Right ventricle myocardium inferior (tissue), 1 donor: ENCODE measurements at regions of chr6 and their contacts with region 1.

Region 1: DNA sequence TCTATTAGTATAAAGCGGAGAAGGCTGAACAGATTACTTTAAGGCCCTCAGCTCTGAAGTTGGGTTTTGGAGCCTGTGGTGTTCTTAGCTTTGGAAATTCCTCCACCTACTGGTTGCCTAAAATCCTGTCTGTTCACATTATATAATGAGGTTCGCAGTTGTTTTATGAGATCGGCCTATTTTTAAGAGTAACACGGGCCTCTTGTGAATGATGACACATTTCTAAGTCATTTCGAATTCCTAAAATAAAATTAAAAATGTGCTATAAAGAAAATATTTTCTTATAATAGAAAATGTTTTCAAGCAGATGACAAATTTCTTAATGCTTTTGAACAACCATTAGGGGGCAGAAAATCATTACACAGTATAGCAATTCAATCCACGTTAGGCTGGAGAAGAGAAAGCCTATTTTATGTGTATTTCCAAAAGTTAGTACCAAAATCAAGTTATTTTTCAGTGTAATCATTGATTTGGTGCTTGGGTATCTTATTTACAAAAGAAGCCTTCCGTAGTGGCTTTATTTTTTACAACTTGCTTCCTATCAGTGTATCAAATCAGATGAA is 15.8 kb upstream of the FAM8A1 start:
- DNase-seq: no peak
- ATAC-seq: peak; percentile 82

Region 2: GRCh38 chr6:17156112-17156921 is 428.0 kb before region 1 on chr6:
- intact Hi-C with region 1: loop called (anchors 1 kb)
- DNase-seq: no peak
- ATAC-seq: no peak

Region 3: GRCh38 chr6:17289630-17290061 is 294.7 kb before region 1 on chr6:
- intact Hi-C with region 1: loop called (anchors 5 kb)
- DNase-seq: peak; percentile 79
- ATAC-seq: peak; percentile 93

Region 4: DNA sequence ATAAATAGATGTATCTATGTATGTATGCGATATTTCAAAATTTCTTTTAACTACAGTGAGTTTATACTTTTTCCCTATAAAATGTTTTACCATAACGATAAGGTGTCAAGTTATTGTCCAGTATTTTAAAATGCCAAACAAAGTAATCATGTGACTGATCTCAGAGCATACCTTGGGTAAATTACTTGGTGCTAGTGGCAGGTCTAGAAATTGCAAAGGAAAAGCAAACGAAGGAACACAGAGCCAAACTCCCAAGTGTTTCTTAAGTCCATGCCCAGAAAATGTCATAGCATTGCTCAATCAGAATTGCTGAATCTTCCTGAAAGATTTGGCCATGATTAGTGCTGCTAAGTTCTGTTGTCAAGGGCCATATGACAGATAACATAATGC is 113.4 kb before region 1 on chr6:
- intact Hi-C with region 1: loop called (anchors 5 kb)
- DNase-seq: no peak
- ATAC-seq: no peak

Region 5: DNA sequence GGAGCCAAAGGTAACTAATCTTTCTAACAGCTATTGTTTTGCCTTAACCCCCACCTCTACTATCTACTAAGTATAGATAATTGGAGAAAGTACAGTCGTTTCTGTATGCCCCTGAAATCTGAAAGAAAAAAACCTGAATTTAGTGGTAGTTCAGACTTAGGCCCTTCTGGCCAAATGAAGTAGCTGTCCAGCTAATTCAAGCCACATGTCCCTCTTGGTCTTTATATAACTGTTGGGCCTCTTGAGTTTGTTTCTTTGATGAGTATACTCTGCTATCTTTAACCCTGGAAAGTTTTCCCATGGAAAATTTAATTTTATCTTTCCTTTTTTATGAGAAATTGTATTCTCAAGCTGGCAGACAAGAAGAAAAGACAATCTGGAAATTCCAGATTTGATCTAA is 57.2 kb before region 1 on chr6:
- intact Hi-C with region 1: no loop called
- DNase-seq: no peak
- ATAC-seq: no peak

Region 6: DNA sequence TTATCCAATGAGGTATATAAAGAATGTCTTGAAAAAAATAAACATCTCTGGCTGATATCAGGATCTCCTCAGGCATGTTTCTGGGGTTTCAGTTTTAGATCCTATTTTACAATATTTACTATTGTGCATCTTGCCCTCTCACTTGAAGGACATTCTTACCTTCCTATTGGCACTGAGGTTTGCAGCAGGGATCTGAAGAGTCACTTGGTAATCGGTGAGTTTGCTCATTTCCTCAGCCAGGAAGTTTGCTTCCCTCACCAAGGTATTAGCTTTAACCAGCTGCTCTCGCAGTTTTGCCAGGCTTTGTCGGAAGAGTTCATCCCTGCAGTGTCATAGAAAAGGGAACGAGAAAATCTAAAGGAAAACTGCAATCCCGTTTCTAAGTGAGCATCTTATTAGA is 224.3 kb after region 1 on chr6:
- intact Hi-C with region 1: loop called (anchors 1 kb)
- DNase-seq: no peak
- ATAC-seq: no peak

Region 7: DNA sequence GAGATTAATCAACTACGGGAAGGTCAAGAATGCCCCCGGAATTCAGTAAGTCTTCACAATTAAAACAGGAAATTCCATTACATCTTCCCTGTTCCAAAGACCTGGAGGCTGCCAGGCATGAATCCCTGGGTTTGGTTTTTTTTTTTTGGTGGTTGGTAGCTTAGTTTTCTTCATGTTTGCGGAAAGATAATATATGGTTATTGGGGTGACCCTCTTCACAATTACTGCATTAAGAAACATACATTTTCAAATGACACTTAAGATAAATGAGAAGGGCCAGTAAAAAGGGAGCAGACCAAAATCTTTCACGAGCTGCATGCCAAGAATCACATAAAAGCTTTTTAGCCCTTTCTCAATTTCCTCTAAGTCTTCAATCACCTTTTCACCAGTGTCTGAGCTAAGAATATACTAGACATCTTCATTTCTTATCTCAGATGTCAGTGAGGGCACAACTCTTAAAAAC is 339.1 kb after region 1 on chr6:
- intact Hi-C with region 1: no loop called
- DNase-seq: no peak
- ATAC-seq: no peak

Region 8: DNA sequence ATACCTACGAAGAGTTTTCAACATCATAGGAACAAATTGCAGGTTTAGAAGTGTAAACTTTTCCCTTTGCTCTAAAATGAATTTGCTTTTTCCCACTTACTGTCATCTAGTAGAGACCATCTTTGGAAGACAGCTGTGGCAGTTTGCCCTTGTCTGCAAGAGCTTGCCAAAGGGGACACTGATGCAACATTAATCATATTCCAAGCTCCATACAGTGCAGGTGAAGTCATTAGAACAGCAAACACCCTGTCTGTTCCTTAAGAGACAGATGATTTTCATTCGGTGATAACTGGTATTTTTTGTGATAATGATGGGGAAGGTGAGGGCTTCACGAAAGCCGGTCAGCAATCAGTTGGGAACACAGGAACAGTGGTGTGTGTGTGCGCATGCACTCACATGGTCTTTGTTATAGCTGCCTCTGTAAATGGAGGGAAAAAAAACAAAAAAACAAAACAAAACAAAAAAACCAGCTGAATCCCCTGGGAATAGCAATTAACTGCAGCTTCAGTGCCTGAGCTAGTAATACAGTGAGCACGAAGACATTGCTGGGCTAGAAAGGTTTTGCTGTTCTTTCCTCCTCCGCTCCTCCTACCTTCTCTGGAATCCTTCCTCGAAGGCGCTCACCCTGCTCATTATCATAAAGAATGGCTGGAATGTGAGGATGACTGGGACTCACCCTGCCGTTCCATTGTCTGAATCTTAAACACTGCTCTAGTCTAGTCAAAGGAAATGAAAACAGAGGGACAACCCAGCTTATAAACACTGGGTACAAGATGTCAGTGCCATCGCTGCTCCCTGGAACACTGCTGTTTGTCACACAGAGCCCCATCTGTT is 438.3 kb after region 1 on chr6:
- intact Hi-C with region 1: no loop called
- DNase-seq: no peak
- ATAC-seq: no peak